ENCODE measurements at regions of chr4 and their contacts with region 1.

Region 1: DNA sequence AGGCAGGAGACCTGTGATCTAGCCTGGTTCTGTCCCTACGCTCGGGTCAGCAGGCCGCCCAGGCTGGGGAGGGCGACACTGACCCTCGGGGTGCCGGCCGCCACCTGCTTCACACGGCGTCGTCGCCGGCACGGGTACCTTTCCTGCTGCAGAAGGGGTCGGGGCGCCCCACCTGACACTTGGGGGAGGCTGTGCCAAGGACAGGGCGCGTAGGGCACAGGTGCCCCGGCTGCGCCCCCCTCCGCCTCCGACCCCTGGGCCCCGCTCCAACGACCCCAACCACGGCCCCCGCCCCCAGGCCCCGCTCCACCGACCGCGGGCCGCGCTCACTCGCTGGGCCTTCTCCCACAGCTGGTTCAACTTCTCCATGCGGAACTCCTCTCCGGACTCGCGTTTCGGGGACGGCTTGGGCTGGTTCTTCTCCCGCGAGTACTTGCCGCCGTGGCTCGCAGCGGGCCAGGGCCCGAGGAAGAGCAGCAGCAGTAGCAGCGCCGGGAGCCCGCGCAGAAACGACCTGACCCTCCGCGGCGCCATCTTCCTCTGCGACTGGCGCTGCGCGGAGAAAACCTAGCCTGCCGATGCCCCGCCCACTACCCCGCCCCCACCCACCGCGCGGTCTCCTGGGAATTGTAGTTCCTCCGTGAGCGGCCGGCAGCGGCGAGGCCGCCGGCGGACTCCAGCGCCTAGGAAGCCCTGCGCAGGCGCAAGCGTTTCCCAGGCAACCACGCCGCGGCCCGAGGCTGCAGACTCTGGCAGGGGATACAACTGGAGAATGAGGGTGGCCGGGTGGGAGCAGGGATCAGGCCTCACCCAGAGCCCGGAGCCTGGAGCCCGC is at the start of gene LRPAP1:
- DNase-seq: peak; percentile 92
- H3K4me3 ChIP-seq: peak within 1 kb of the TSS; percentile 57 to 79 (median 73)
- H3K27ac ChIP-seq: peak within 1 kb of the TSS; percentile 45
- H3K4me1 ChIP-seq: peaks cover 11% of the 10 kb centered on the region
- H3K27me3 ChIP-seq: peaks cover 0 to 4% of the 10 kb centered on the region in 2 experiments
- CTCF ChIP-seq: no peak
- POLR2A ChIP-seq: peak; percentile 90
- total RNA-seq, gene LRPAP1: 152 and 170 TPM in 2 replicates

Region 2: DNA sequence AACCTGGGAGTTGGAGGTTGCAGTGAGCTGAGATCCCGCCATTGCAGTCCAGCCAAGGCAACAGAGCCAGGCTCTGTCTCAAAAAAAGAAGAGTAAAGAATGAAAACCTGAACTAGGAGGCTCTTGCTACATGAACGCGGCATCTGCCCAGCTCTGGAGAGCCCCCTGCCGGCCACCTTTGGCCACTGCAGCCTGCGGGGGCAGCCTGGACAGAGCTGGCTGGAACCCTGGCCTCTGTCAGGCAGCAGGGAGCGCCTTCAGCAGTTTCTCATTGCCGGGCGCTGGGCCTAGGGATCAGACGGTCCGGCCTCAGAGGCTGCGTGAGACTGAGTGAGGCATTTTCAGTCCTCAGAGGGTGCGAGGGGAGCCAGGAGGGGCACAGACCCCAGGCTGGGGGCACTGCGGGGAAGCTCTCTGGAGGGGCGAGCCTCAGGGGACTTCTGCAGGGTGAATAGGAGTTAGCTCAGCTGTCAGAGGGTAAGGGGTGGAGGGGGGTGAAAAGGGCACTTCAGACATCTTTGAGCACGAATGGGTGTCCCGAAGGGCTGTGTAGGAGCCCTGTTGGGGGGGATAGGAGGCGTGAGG is 51.5 kb before region 1 on chr4:
- CTCF ChIA-PET with region 1: no interaction called
- POLR2A ChIA-PET with region 1: no interaction called
- dilution Hi-C with region 1: no loop called
- intact Hi-C with region 1: no loop called
- DNase-seq: peak; percentile 78
- H3K4me3 ChIP-seq: no peak overlapping the region
- H3K27ac ChIP-seq: no peak overlapping the region
- H3K4me1 ChIP-seq: no peaks in the 10 kb centered on the region
- H3K27me3 ChIP-seq: peaks cover 2 to 14% of the 10 kb centered on the region in 2 experiments
- CTCF ChIP-seq: peak; percentile 98 to 100
- POLR2A ChIP-seq: no peak

Region 3: DNA sequence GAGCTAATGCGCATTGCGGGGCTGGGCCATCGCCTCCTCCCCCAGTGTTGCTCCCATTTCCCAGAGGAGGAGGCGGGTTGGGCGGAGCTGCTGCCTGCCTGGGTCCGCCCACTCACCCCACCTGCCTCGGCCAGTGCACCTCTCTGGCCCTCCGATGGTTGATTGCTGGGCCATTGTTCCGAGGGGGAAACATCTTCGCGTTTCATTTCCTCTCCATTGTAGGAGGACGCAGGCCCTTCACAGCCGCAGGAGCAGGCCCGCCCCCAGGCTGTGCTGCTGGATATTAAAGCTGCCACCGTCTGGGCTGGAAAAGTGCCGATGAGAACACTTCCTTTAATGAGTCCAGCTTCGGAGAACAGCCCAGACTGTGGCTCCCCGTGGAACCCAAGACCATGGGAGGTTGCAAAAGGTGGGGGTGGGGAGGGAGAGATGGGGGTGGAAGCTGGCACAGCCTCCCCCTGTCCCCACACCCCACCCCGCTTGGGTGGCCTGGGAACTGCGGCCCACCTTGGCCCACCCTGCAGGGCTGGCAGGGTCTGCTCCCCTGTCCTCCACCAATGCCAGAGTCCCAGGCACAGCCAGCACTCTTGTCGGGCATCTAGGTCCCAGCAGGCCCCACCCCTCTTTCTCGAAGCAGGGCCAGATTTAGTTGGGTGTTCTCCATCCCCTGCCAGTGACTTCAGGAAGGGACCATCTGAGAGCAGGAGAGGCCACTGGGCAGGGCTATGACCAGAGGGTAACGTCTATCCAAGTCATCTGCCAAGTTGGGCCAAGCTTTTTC is 330.7 kb after region 1 on chr4:
- CTCF ChIA-PET with region 1: no interaction called
- POLR2A ChIA-PET with region 1: no interaction called
- dilution Hi-C with region 1: no loop called
- intact Hi-C with region 1: loop called (anchors 5 kb)
- DNase-seq: peak; percentile 81
- H3K4me3 ChIP-seq: no peak overlapping the region
- H3K27ac ChIP-seq: no peak overlapping the region
- H3K4me1 ChIP-seq: peaks cover 4% of the 10 kb centered on the region
- H3K27me3 ChIP-seq: no peaks in the 10 kb centered on the region
- CTCF ChIP-seq: no peak
- POLR2A ChIP-seq: no peak

Region 4: GRCh38 chr4:4430492-4431197 is 898.5 kb after region 1 on chr4:
- CTCF ChIA-PET with region 1: no interaction called
- POLR2A ChIA-PET with region 1: no interaction called
- dilution Hi-C with region 1: no loop called
- intact Hi-C with region 1: no loop called
- DNase-seq: peak; percentile 50
- H3K4me3 ChIP-seq: no peak overlapping the region
- H3K27ac ChIP-seq: no peak overlapping the region
- H3K4me1 ChIP-seq: peaks cover 4% of the 10 kb centered on the region
- H3K27me3 ChIP-seq: no peaks in the 10 kb centered on the region
- CTCF ChIP-seq: peak; percentile 73 to 74
- POLR2A ChIP-seq: no peak